Colonic mucosa (tissue), 4 donors: ENCODE measurements at regions of chr5 and their contacts with region 1.

Region 1: GRCh38 chr5:42811591-42812446 is at the start of gene SELENOP:
- DNase-seq: peak; percentile 79
- H3K4me3 ChIP-seq: peak within 1 kb of the TSS; percentile 36
- H3K27ac ChIP-seq: peak within 1 kb of the TSS; percentile 77
- H3K4me1 ChIP-seq: no peaks in the 10 kb centered on the region
- H3K27me3 ChIP-seq: no peaks in the 10 kb centered on the region
- CTCF ChIP-seq: no peak
- total RNA-seq, gene SELENOP: 171 to 687 TPM

Region 2: GRCh38 chr5:42889311-42889933 is 77.6 kb after region 1 on chr5:
- intact Hi-C with region 1: loop called (anchors 10 kb)
- DNase-seq: peak; percentile 91
- H3K4me3 ChIP-seq: no peak overlapping the region
- H3K27ac ChIP-seq: no peak overlapping the region
- H3K4me1 ChIP-seq: no peaks in the 10 kb centered on the region
- H3K27me3 ChIP-seq: no peaks in the 10 kb centered on the region
- CTCF ChIP-seq: peak; percentile 94

Region 3: GRCh38 chr5:43802119-43802518 is 990.3 kb after region 1 on chr5:
- intact Hi-C with region 1: no loop called
- DNase-seq: no peak
- H3K4me3 ChIP-seq: no peak overlapping the region
- H3K27ac ChIP-seq: no peak overlapping the region
- H3K4me1 ChIP-seq: no peaks in the 10 kb centered on the region
- H3K27me3 ChIP-seq: no peaks in the 10 kb centered on the region
- CTCF ChIP-seq: no peak